Dorsolateral prefrontal cortex (tissue), 120 donors: ENCODE measurements at regions of chr7 and their contacts with region 1.

Region 1: DNA sequence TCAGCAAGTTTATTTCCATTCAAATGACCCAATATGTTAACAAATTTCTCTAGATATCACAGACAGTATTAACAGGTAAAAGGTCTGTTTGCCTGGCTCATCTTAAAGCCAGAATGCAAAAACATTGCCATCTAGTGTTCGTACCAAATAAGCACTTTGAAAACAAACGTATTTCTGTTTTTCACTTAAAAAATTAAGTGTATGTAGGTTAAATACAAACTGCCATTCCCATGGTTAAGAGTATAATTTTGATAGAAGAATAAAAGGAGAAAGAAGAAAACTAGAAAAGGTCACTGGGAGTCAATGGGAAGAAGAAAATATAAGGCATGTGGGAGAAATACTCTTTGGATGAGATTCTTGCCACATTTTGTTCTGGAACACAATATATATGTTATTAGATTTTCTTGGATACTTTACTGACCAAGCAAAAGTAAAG is 51.0 kb downstream of the ORC5 start:
- DNase-seq: no peak
- H3K4me3 ChIP-seq: no peak overlapping the region
- H3K27ac ChIP-seq: peak overlapping the region in 8 of 59 donors; percentile 1 to 38 (median 18)
- H3K27me3 ChIP-seq: no peaks in the 10 kb centered on the region
- CTCF ChIP-seq: peak; percentile 55 to 88 (median 73)

Region 2: GRCh38 chr7:102912742-102913141 is 1244.1 kb before region 1 on chr7 and contains the start of gene LRRC17:
- intact Hi-C with region 1: no loop called
- DNase-seq: no peak
- H3K4me3 ChIP-seq: peak within 1 kb of the TSS in 38 of 59 donors; percentile 0 to 50 (median 26)
- H3K27ac ChIP-seq: peak within 1 kb of the TSS in 3 of 59 donors; percentile 47 to 59 (median 49)
- H3K27me3 ChIP-seq: no peaks in the 10 kb centered on the region
- CTCF ChIP-seq: no peak
- total RNA-seq, gene LRRC17: 0.31 to 7.5 (median 3.1) TPM

Region 3: GRCh38 chr7:103447073-103447951 is 709.5 kb before region 1 on chr7:
- intact Hi-C with region 1: loop called in 1 of 2 experiments (anchors 5 kb)
- DNase-seq: peak in 6 of 10 donors; percentile 10 to 79 (median 52)
- H3K4me3 ChIP-seq: peak overlapping the region in 6 of 59 donors; percentile 1 to 22 (median 9)
- H3K27ac ChIP-seq: no peak overlapping the region
- H3K27me3 ChIP-seq: peaks cover 0 to 55% (median 29%) of the 10 kb centered on the region in 45 donors
- CTCF ChIP-seq: peak in 54 of 56 donors; percentile 32 to 73 (median 58)

Region 4: DNA sequence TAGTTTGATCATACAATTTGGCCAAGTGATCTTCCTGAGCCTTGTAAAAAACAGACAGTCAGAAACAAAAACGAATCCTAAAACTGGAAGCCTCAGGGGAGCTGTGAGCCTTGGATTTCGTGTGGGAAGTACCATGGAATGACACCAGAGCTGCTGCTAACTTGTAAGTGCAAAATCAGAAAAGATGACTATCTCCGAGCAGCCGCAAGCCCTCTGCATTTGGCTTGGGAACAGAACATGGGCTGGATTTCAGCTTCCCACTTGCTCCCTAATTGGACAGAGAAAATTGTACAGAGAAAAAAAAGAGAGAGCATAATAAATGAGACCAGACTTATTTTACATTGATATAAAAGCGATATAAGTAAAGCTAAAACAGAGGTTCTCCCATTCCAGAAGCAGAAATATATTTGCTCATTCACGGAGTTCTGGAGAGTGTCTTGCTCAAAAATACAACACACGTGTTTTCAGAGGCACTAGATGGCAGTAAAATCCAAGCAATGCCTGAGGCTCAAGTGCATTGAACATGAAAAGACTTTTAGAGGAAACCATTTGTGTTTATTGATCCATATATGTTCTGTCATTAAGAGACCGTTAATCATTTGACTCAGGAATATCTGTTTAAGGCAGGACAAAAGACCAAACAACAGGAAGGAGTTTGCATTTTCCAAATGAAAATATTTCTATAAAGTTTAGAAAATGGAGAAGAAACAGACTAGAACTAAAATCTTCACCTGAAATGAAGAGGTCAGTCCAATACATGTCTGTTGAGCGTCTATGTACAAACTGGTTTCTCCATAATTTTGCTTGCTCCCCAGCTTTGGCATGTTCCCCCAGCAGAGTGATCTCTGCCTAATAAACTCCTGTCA is 632.6 kb before region 1 on chr7:
- intact Hi-C with region 1: loop called (anchors 5 kb)
- DNase-seq: peak in 7 of 10 donors; percentile 35 to 61 (median 45)
- H3K4me3 ChIP-seq: peak overlapping the region in 45 of 59 donors; percentile 1 to 55 (median 28)
- H3K27ac ChIP-seq: peak overlapping the region in 56 of 59 donors; percentile 7 to 85 (median 68)
- H3K27me3 ChIP-seq: no peaks in the 10 kb centered on the region
- CTCF ChIP-seq: peak; percentile 13 to 90 (median 69)

Region 5: GRCh38 chr7:103573479-103574058 is 583.3 kb before region 1 on chr7:
- intact Hi-C with region 1: loop called (anchors 2 to 10 kb)
- DNase-seq: no peak
- H3K4me3 ChIP-seq: no peak overlapping the region
- H3K27ac ChIP-seq: peak overlapping the region in 1 of 59 donors; percentile 32
- H3K27me3 ChIP-seq: peaks cover 0 to 2% (median 0%) of the 10 kb centered on the region in 45 donors
- CTCF ChIP-seq: peak; percentile 66 to 93 (median 81)